ENCODE measurements at regions of chr2 and their contacts with region 1.

Region 1: DNA sequence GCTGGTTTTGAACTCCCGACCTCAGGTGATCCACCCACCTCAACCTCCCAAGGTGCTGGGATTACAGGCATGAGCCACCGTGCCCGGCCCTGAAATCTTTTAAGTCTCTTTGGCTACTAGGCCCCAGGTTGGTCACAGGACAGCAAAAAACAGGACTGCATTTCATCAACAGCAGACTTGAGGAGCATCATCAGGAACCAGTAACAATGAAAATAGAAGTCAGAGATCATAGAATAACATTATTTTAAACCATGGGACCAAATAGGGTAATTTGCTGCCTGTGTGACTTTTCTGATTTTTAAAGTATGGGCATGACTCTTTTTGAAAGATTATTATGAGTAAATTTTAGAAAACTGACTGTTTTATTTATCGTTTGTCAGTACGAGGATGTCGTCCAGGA is 24.8 kb downstream of the PPP1CB start:
- DNase-seq: no peak
- ATAC-seq: no peak
- H3K4me3 ChIP-seq: no peak overlapping the region
- H3K27ac ChIP-seq: no peak overlapping the region
- H3K4me1 ChIP-seq: no peaks in the 10 kb centered on the region
- H3K27me3 ChIP-seq: no peaks in the 10 kb centered on the region
- CTCF ChIP-seq: no peak
- POLR2A ChIP-seq: no peak
- RAD21 ChIP-seq: no peak

Region 2: GRCh38 chr2:27370026-27370815 is 1406.2 kb before region 1 on chr2 and contains the starts of genes EIF2B4 and SNX17:
- CTCF ChIA-PET with region 1: no interaction called
- POLR2A ChIA-PET with region 1: no interaction called
- dilution Hi-C with region 1: no loop called
- in situ Hi-C with region 1: no loop called
- intact Hi-C with region 1: no loop called
- DNase-seq: peak; percentile 99
- ATAC-seq: peak; percentile 94
- H3K4me3 ChIP-seq: peak within 1 kb of the TSS; percentile 71
- H3K27ac ChIP-seq: peak within 1 kb of the TSS; percentile 84
- H3K4me1 ChIP-seq: peaks cover 8% of the 10 kb centered on the region
- H3K27me3 ChIP-seq: no peaks in the 10 kb centered on the region
- CTCF ChIP-seq: peak; percentile 96
- POLR2A ChIP-seq: peak; percentile 80
- RAD21 ChIP-seq: peak; percentile 66
- total RNA-seq, gene EIF2B4: 47.9 and 48.9 TPM in 2 replicates
- total RNA-seq, gene SNX17: 130 and 131 TPM in 2 replicates

Region 3: GRCh38 chr2:28610583-28611201 is 165.8 kb before region 1 on chr2:
- CTCF ChIA-PET with region 1: no interaction called
- POLR2A ChIA-PET with region 1: no interaction called
- dilution Hi-C with region 1: no loop called
- in situ Hi-C with region 1: no loop called
- intact Hi-C with region 1: no loop called
- DNase-seq: peak; percentile 96
- ATAC-seq: peak; percentile 93
- H3K4me3 ChIP-seq: no peak overlapping the region
- H3K27ac ChIP-seq: no peak overlapping the region
- H3K4me1 ChIP-seq: peaks cover 13% of the 10 kb centered on the region
- H3K27me3 ChIP-seq: no peaks in the 10 kb centered on the region
- CTCF ChIP-seq: no peak
- POLR2A ChIP-seq: no peak
- RAD21 ChIP-seq: peak; percentile 38

Region 4: GRCh38 chr2:28764909-28765711 is 11.4 kb before region 1 on chr2:
- CTCF ChIA-PET with region 1: no interaction called
- POLR2A ChIA-PET with region 1: no interaction called
- dilution Hi-C with region 1: no loop called
- in situ Hi-C with region 1: no loop called
- intact Hi-C with region 1: loop called (anchors 2 kb)
- DNase-seq: peak; percentile 9
- ATAC-seq: peak; percentile 24
- H3K4me3 ChIP-seq: no peak overlapping the region
- H3K27ac ChIP-seq: no peak overlapping the region
- H3K4me1 ChIP-seq: peaks cover 5% of the 10 kb centered on the region
- H3K27me3 ChIP-seq: no peaks in the 10 kb centered on the region
- CTCF ChIP-seq: no peak
- POLR2A ChIP-seq: no peak
- RAD21 ChIP-seq: no peak

Region 5: DNA sequence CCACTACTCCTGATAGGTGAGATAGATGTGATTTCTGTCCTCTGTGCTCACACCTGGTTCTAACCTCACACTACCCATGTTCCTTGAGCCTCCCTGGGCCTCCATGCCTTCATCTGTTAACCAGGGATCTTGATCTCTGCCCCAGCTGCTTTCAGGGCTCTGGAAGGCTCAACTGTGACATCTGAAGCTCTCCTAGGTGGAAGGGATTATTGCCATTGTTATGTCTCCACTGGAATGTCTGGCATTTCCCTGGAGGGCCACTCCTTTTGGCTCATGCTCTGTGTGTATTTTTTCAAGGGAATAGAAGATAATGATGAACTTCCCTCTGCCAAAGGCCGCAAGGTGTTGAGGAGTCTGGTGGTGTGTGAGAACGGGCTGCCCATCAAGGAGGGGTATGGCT is 256.7 kb after region 1 on chr2:
- CTCF ChIA-PET with region 1: no interaction called
- POLR2A ChIA-PET with region 1: no interaction called
- dilution Hi-C with region 1: no loop called
- in situ Hi-C with region 1: no loop called
- intact Hi-C with region 1: no loop called
- DNase-seq: peak; percentile 22
- ATAC-seq: peak; percentile 37; the same call in 1 of the 2 replicates
- H3K4me3 ChIP-seq: no peak overlapping the region
- H3K27ac ChIP-seq: no peak overlapping the region
- H3K4me1 ChIP-seq: peaks cover 6% of the 10 kb centered on the region
- H3K27me3 ChIP-seq: no peaks in the 10 kb centered on the region
- CTCF ChIP-seq: no peak
- POLR2A ChIP-seq: no peak
- RAD21 ChIP-seq: no peak

Measured in IMR-90 (cell line).